Caco-2 (cell line): ENCODE measurements at regions of chr11 and their contacts with region 1.

Region 1: DNA sequence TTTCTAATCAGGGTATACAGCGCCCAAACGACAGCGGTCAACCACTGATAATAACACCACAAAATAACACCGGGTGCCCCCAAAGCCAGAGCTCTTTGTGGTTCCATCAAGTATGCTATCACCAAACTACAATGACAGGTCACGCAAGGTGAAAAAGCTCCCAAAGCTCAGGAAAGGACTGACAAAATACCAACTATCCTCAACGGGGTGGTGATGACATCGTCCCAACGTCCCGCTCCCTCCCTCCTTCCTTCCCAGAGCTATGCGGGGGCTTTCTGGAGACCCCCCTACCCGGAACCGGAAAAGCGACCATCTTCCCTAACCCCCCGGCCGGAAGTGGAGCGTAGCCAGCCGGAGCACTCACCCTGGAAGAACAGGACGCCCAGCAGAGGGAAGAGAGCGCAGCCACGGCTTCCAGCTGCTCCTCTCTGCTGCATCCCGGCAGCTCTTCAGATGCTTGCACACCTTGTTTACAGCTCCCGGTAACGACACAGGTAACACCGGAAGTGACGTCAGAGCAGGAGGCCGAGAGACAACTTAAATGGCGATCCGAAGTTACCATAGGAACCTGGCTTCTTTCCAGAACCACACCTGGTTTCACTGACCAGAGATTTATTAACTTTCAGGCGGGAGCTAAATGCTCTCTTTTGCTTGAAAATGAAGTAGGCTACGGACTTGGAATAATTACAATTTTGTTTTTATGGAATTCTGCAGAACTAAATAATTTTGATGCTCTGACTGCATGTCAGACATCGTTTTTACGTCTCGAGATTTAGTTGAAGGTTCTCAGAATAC is at the start of gene MPZL3:
- DNase-seq: peak; percentile 97 to 99
- H3K4me3 ChIP-seq: peak within 1 kb of the TSS; percentile 65
- H3K4me3 Mint-ChIP-seq: peak within 1 kb of the TSS; percentile 85
- H3K27ac Mint-ChIP-seq: peak within 1 kb of the TSS; percentile 98
- H3K4me1 ChIP-seq: peaks cover 11% of the 10 kb centered on the region
- H3K4me1 Mint-ChIP-seq: peaks cover 24% of the 10 kb centered on the region
- H3K27me3 ChIP-seq: no peaks in the 10 kb centered on the region
- H3K27me3 Mint-ChIP-seq: no peaks in the 10 kb centered on the region
- CTCF ChIP-seq: peak in 1 of 2 experiments; percentile 20
- total RNA-seq, gene MPZL3: 29.6 and 31.8 TPM in 2 replicates

Region 2: DNA sequence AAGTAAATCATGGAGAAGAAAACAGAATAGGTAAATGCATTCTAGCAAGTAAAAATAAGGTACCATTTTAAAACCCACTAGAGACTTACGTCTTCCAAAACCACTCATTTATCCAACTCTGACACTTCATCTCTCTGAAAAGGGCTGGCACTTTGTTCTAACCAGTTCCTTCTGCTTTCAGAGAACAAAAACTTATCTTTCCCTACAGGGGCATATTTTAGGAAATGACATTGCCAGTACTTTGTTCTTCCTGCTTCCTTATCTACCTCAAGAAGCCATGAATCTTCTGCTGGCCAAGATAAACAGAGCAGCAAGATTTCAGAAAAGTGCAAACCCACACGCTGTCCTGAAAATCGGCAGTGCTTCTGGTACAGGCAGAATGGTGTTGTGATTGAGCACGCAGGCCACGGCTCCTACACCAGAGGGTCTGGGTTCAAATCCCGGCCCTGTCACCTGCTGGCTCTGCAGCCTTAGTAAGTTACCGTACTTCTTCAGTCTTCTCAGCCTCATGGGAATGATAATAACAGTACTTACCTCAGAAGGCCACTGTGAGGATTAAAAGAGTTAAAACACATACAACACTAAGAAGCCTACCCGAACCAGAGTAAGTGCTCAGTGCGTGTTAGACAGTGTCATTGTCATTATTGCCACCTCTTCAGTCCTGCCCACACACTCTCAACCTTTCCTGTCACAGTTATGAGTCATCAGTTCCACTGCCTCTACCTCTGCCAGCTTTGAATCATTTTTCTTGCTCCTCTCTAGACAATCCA is 10.9 kb before region 1 on chr11:
- CTCF ChIA-PET with region 1: interaction called, 11 read pairs
- POLR2A ChIA-PET with region 1: interaction called, 11 read pairs
- intact Hi-C with region 1: loop called (anchors 1 kb)
- DNase-seq: peak; percentile 68 to 71
- H3K4me3 ChIP-seq: no peak overlapping the region
- H3K4me3 Mint-ChIP-seq: peak overlapping the region; percentile 42
- H3K27ac Mint-ChIP-seq: peak overlapping the region; percentile 82
- H3K4me1 ChIP-seq: peaks cover 69% of the 10 kb centered on the region
- H3K4me1 Mint-ChIP-seq: peaks cover 65% of the 10 kb centered on the region
- H3K27me3 ChIP-seq: no peaks in the 10 kb centered on the region
- H3K27me3 Mint-ChIP-seq: no peaks in the 10 kb centered on the region
- CTCF ChIP-seq: no peak

Region 3: DNA sequence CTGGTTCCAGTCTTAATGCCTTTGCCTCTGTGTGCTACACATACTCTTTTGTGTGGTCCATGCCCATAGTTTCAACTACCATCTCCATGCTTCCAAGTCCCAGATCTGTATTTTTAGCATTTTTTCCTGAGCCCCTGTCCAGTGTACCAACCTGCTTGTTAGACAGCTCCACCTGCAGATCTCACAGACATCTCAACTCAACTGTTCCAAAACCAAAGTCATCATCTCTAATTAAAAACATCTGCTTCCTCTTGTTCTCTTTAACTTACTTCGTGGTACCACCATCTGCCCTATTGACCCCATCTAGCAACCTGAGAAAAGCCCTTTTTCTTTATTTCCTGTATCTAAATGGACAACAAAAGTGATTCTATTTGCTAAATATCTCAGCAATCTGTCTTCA is 175.7 kb after region 1 on chr11:
- CTCF ChIA-PET with region 1: no interaction called
- POLR2A ChIA-PET with region 1: no interaction called
- intact Hi-C with region 1: no loop called
- DNase-seq: no peak
- H3K4me3 ChIP-seq: no peak overlapping the region
- H3K4me3 Mint-ChIP-seq: no peak overlapping the region
- H3K27ac Mint-ChIP-seq: no peak overlapping the region
- H3K4me1 ChIP-seq: peaks cover 23% of the 10 kb centered on the region
- H3K4me1 Mint-ChIP-seq: peaks cover 33% of the 10 kb centered on the region
- H3K27me3 ChIP-seq: no peaks in the 10 kb centered on the region
- H3K27me3 Mint-ChIP-seq: no peaks in the 10 kb centered on the region
- CTCF ChIP-seq: no peak